Psoas muscle (tissue), 8 donors: ENCODE measurements at regions of chr5 and their contacts with region 1.

Region 1: GRCh38 chr5:3282841-3283240 is 312.8 kb upstream of the IRX1 start:
- DNase-seq: no peak
- ATAC-seq: no peak
- H3K4me3 ChIP-seq: no peak overlapping the region
- H3K27ac ChIP-seq: no peak overlapping the region
- H3K4me1 ChIP-seq: no peaks in the 10 kb centered on the region
- H3K27me3 ChIP-seq: no peaks in the 10 kb centered on the region
- CTCF ChIP-seq: no peak

Region 2: GRCh38 chr5:3359643-3360042 is 76.8 kb after region 1 on chr5:
- intact Hi-C with region 1: loop called in 1 of 2 experiments (anchors 2 kb)
- DNase-seq: no peak
- ATAC-seq: peak; percentile 26 to 77 (median 50)
- H3K4me3 ChIP-seq: no peak overlapping the region
- H3K27ac ChIP-seq: no peak overlapping the region
- H3K4me1 ChIP-seq: no peaks in the 10 kb centered on the region
- H3K27me3 ChIP-seq: no peaks in the 10 kb centered on the region
- CTCF ChIP-seq: no peak